AG04450 (cell line): ENCODE measurements at regions of chr3 and their contacts with region 1.

Region 1: DNA sequence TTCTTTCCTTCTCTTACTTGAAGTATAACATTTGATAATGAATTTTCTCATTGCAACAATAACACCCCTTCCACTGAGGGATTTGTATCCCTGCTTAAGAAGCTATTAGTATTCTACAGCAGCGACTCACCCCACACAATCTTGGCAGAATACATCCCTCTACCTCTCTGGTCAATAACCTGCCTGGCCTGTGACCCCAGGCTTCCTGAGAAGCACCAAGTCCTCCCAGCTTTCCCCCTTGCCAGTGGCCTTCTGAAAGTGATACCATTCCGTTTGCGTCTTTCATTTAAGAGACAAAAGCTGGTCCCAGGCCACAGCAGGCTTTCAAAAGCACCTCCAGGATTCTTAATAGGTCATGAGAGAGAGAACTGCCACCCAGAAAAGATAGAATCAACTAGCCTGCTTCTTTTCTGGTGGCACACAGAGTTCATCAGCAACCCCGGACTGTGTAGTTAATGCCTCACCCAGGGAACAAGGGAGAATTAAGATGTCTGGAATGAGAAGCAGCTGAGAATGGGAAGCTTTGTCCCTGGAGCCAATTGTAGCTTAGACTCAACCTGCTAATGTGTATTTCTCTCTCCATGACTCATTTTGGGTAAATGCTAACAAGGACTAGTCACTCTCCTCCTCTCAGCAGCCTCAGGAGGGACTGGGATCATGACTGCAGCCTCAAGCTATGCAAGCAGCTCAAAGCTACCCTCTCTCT is 101.0 kb upstream of the CPNE4 start:
- DNase-seq: peak; percentile 95
- H3K4me3 ChIP-seq: peak overlapping the region; percentile 51
- H3K27ac ChIP-seq: peak overlapping the region; percentile 99
- H3K27me3 ChIP-seq: no peaks in the 10 kb centered on the region
- CTCF ChIP-seq: no peak

Region 2: GRCh38 chr3:131602011-131602764 is 533.6 kb before region 1 on chr3:
- CTCF ChIA-PET with region 1: no interaction called
- POLR2A ChIA-PET with region 1: no interaction called
- DNase-seq: no peak
- H3K4me3 ChIP-seq: no peak overlapping the region
- H3K27ac ChIP-seq: no peak overlapping the region
- H3K27me3 ChIP-seq: no peaks in the 10 kb centered on the region
- CTCF ChIP-seq: no peak

Region 3: GRCh38 chr3:131903988-131904415 is 231.8 kb before region 1 on chr3:
- CTCF ChIA-PET with region 1: no interaction called
- POLR2A ChIA-PET with region 1: interaction called, 10 read pairs
- DNase-seq: peak; percentile 98
- H3K4me3 ChIP-seq: no peak overlapping the region
- H3K27ac ChIP-seq: peak overlapping the region; percentile 94
- H3K27me3 ChIP-seq: no peaks in the 10 kb centered on the region
- CTCF ChIP-seq: no peak